Left cardiac atrium (tissue), 4 donors: ENCODE measurements at regions of chr3 and their contacts with region 1.

Region 1: DNA sequence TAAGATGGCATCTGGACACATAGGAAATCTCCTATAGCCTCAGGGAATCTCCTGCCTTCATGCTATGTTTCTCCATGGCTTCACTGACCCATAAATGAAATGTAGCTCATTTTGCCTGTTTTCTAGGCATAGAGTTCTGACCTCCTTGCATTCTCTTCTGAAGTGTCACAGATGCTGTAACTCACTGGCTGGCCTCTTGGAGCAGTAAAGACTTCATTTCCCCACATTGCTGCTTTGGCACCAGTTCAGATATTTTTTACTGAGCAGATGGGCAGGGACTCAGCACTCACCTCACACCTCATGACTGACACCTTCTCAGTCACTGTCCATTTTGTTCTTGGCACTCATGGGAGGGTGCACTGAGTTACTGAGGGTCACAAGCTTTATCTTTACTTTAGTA is 286.7 kb upstream of the TGFBR2 start:
- DNase-seq: peak; percentile 56
- ATAC-seq: peak; percentile 96 to 97

Region 2: GRCh38 chr3:30393079-30393478 is 73.4 kb after region 1 on chr3:
- intact Hi-C with region 1: loop called in 1 of 2 experiments (anchors 5 kb)
- DNase-seq: no peak
- ATAC-seq: no peak

Region 3: DNA sequence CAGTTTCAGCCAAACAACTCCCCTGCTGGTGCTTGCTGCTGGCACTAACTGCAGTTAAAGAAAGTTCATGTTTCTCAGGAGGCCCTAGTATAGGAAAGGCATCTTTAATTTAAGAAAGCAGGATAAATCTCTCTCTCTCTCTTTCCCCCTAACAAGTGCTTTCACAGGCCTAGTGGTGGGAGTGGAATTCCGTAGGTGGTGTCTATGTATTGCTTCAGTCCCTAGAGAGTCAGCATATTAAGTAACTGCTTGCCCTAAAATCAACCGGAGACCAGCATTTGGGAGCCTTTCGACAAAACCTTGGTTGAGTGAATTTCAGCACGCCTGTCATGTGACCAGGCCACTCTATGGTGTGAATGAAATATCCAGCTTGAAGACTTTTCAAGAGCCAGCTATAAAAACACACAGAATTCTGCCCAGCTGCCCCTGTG is 117.5 kb after region 1 on chr3:
- intact Hi-C with region 1: loop called in 1 of 2 experiments (anchors 5 kb)
- DNase-seq: peak; percentile 36
- ATAC-seq: peak; percentile 63 to 81

Region 4: DNA sequence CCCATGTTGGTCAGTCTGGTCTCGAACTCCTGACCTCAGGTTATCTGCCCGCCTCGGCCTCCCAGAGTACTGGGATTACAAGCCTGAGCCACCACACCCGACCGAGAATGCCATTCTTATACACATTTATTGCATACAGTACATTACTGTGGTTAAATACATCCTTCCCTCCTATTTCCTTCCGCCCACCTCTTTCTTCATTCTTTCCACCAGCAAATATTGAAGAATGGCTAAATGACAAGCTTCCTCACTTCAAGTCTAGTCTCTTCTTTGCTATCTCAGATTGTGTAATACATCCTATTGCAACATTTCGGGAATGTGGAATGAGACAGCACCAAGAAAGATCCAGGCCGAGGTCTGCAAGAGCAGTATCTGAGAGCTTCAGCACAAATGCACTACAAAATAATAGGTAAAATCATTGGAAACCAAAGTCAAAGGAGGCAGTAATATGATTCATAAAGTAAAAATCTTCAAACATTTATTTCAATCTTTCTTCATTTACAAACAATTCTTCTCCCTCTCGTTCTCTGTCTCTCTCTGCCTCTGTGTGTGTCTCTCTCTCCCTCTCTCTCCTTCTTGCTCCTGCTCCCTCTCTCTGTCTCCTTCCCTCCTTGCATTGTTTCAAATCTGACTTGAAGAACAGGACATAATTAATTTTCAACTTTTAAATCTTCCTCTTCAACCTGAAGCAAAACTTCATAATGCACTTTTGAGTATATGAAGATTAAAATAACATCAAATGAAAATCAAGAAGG is 192.0 kb after region 1 on chr3:
- intact Hi-C with region 1: loop called in 1 of 2 experiments (anchors 10 kb)
- DNase-seq: no peak
- ATAC-seq: peak; percentile 82 to 94

Region 5: GRCh38 chr3:30578479-30578878 is 258.8 kb after region 1 on chr3:
- intact Hi-C with region 1: loop called in 1 of 2 experiments (anchors 5 kb)
- DNase-seq: peak; percentile 29
- ATAC-seq: peak in 1 of 2 donors; percentile 81